CD4-positive, alpha-beta memory T cell (primary cell): ENCODE measurements at regions of chr1 and their contacts with region 1.

Region 1: DNA sequence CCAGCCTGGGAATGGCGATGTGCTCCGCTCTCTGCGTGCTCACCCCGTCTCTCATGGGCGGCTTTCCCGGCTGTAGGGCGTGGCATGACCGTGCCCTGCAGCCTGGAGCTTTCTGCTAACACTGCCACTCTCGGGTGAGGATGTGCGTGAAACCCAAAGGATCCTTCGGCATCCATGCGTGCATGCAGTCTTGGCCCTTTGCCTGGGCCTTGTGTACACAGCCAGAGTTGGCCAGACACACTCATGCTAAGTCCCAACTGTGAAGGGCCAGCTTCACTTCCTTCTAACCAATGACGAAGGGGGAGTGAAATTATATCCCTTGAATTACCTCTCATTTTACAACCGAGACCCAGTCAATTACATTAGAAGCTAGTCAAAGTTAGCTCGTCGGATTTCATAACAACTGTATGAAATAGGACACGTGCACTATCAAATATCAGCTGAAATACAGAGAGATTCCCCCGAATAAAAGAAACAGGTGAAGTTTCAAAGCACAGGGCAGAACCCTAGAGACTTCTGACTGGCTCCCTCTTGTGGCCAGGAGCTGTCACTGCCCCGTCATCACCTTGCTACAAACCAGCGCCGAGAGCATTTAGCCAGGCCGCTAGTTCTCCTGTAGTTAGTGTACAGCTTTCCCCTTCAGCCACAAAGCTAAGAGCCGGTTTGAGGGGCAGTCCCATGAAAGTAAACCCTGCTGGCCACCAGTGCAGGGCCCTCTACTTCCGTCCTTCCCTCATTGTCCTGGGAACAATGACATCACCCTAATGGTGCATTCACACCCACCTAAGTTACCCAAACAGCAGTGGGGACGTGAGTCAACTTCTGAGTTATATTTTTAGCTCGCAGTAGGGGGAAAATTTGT is 63.4 kb upstream of the COA6 start:
- DNase-seq: peak; percentile 60 to 71 (median 65)
- H3K4me3 ChIP-seq: no peak overlapping the region
- H3K4me3 Mint-ChIP-seq: peak overlapping the region in 3 of 8 donors; percentile 10 to 59 (median 49)
- H3K27ac ChIP-seq: no peak overlapping the region
- H3K27ac Mint-ChIP-seq: peak overlapping the region in 2 of 7 donors; percentile 1 to 85
- H3K4me1 ChIP-seq: peaks cover 37% of the 10 kb centered on the region
- H3K4me1 Mint-ChIP-seq: peaks cover 0 to 42% (median 15%) of the 10 kb centered on the region in 4 donors
- H3K27me3 ChIP-seq: no peaks in the 10 kb centered on the region
- H3K27me3 Mint-ChIP-seq: peaks cover 0 to 13% of the 10 kb centered on the region in 2 donors

Region 2: GRCh38 chr1:234114648-234115307 is 195.1 kb before region 1 on chr1:
- CTCF ChIA-PET with region 1: interaction called, 14 read pairs
- POLR2A ChIA-PET with region 1: no interaction called
- intact Hi-C with region 1: no loop called
- DNase-seq: peak in 4 of 5 donors; percentile 24 to 36 (median 32)
- H3K4me3 ChIP-seq: no peak overlapping the region
- H3K4me3 Mint-ChIP-seq: peak overlapping the region in 7 of 8 donors; percentile 52 to 86 (median 76)
- H3K27ac ChIP-seq: no peak overlapping the region
- H3K27ac Mint-ChIP-seq: peak overlapping the region in 1 of 7 donors; percentile 59
- H3K4me1 ChIP-seq: no peaks in the 10 kb centered on the region
- H3K4me1 Mint-ChIP-seq: peaks cover 4 to 9% (median 6%) of the 10 kb centered on the region in 4 donors
- H3K27me3 ChIP-seq: no peaks in the 10 kb centered on the region
- H3K27me3 Mint-ChIP-seq: peaks cover 3 to 17% of the 10 kb centered on the region in 2 donors

Region 3: DNA sequence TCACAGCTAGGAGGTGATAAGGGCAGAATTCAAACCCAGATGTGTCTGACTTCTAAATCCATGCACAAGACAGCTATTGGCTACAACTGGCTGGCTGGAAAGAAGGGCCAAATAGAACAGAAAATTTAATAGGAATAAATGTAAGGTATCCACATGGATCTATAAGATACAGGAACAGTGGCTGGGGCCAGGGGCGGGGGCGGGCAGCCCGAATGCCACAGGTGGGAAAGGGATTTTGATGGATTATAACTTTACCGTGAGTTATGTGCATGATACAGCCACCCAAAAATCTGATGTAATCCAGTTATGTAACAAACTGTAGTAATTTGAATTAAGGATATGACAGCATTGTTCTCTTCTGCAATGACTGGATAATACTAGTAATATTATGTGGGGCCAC is 23.6 kb before region 1 on chr1:
- CTCF ChIA-PET with region 1: interaction called, 25 read pairs
- POLR2A ChIA-PET with region 1: no interaction called
- intact Hi-C with region 1: no loop called
- DNase-seq: no peak
- H3K4me3 ChIP-seq: no peak overlapping the region
- H3K4me3 Mint-ChIP-seq: no peak overlapping the region
- H3K27ac ChIP-seq: no peak overlapping the region
- H3K27ac Mint-ChIP-seq: no peak overlapping the region
- H3K4me1 ChIP-seq: no peaks in the 10 kb centered on the region
- H3K4me1 Mint-ChIP-seq: no peaks in the 10 kb centered on the region
- H3K27me3 ChIP-seq: no peaks in the 10 kb centered on the region
- H3K27me3 Mint-ChIP-seq: peaks cover 2 to 16% of the 10 kb centered on the region in 2 donors

Region 4: GRCh38 chr1:234320549-234320948 is 10.7 kb after region 1 on chr1:
- CTCF ChIA-PET with region 1: interaction called, 26 read pairs
- POLR2A ChIA-PET with region 1: interaction called, 3 read pairs
- intact Hi-C with region 1: no loop called
- DNase-seq: no peak
- H3K4me3 ChIP-seq: no peak overlapping the region
- H3K4me3 Mint-ChIP-seq: no peak overlapping the region
- H3K27ac ChIP-seq: no peak overlapping the region
- H3K27ac Mint-ChIP-seq: peak overlapping the region in 2 of 7 donors; percentile 39 to 81
- H3K4me1 ChIP-seq: peaks cover 30% of the 10 kb centered on the region
- H3K4me1 Mint-ChIP-seq: peaks cover 0 to 61% (median 18%) of the 10 kb centered on the region in 4 donors
- H3K27me3 ChIP-seq: no peaks in the 10 kb centered on the region
- H3K27me3 Mint-ChIP-seq: peaks cover 7 to 28% of the 10 kb centered on the region in 2 donors

Region 5: DNA sequence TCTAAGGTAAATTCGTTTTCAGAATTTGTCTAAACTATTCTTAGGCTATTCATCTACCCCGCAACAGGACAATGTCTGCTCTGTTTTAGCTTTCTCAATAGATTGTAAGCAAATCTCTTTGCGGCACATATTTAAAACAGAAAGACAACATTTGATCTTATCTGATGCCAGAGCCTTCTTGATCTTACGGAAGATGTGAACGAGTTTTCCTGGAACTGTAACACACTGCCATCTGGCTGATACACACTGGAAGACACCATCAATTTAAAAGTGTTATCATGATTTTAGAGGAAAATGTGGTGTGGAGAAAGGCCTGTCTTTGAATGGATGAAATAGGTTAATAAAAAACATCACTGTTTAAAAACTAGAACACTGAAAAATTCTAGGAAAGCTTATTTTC is 99.5 kb after region 1 on chr1:
- CTCF ChIA-PET with region 1: interaction called, 33 read pairs
- POLR2A ChIA-PET with region 1: no interaction called
- intact Hi-C with region 1: no loop called
- DNase-seq: peak; percentile 48 to 74 (median 65)
- H3K4me3 ChIP-seq: peak overlapping the region in 1 of 2 donors; percentile 22
- H3K4me3 Mint-ChIP-seq: peak overlapping the region; percentile 68 to 91 (median 83)
- H3K27ac ChIP-seq: peak overlapping the region; percentile 62
- H3K27ac Mint-ChIP-seq: peak overlapping the region; percentile 79 to 99 (median 96)
- H3K4me1 ChIP-seq: peaks cover 18% of the 10 kb centered on the region
- H3K4me1 Mint-ChIP-seq: peaks cover 9 to 30% (median 17%) of the 10 kb centered on the region in 4 donors
- H3K27me3 ChIP-seq: no peaks in the 10 kb centered on the region
- H3K27me3 Mint-ChIP-seq: no peaks in the 10 kb centered on the region